ENCODE measurements at regions of chrX and their contacts with region 1.

Region 1: GRCh38 chrX:3811331-3812311 is 98.2 kb upstream of the PRKX start:
- DNase-seq: peak; percentile 12
- H3K4me3 Mint-ChIP-seq: no peak overlapping the region
- H3K27ac Mint-ChIP-seq: no peak overlapping the region
- H3K4me1 Mint-ChIP-seq: no peaks in the 10 kb centered on the region
- H3K27me3 Mint-ChIP-seq: peaks cover 32% of the 10 kb centered on the region
- CTCF ChIP-seq: peak; percentile 41

Region 2: GRCh38 chrX:3651276-3651675 is 160.3 kb before region 1 on chrX:
- CTCF ChIA-PET with region 1: interaction called, 6 read pairs
- intact Hi-C with region 1: loop called (anchors 1 kb)
- DNase-seq: no peak
- H3K4me3 Mint-ChIP-seq: no peak overlapping the region
- H3K27ac Mint-ChIP-seq: no peak overlapping the region
- H3K4me1 Mint-ChIP-seq: no peaks in the 10 kb centered on the region
- H3K27me3 Mint-ChIP-seq: no peaks in the 10 kb centered on the region
- CTCF ChIP-seq: peak; percentile 26

Region 3: DNA sequence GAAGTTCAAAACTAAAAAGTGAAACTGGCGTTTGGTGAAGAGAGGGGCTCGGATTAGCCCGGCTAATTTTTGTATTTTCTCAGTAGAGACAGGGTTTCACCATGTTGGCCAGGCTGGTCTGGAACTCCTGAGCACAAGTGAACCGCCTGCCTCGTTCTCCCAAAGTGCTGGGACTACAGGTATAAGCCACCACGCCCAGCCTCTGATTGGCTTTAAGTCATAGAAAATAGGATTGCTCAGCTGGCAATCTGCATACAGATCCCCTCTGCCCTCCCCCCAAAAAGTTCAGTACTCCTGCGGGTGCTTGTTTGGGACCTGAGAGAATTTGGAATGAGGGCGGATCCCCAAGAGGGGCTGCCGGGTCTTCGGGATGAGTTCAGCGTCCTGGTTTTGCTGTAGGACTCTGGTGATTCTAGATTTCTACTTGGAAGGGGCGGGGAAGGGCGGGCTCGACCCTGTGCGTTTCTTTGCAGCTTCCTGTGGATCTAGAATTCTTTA is 97.6 kb before region 1 on chrX:
- CTCF ChIA-PET with region 1: no interaction called
- intact Hi-C with region 1: loop called (anchors 2 kb)
- DNase-seq: no peak
- H3K4me3 Mint-ChIP-seq: peak overlapping the region; percentile 79
- H3K27ac Mint-ChIP-seq: no peak overlapping the region
- H3K4me1 Mint-ChIP-seq: peaks cover 13% of the 10 kb centered on the region
- H3K27me3 Mint-ChIP-seq: no peaks in the 10 kb centered on the region
- CTCF ChIP-seq: no peak

Measured in Calu3 (cell line).